WTC11 (cell line): ENCODE measurements at regions of chr10 and their contacts with region 1.

Region 1: GRCh38 chr10:132360766-132361447 is 28.9 kb downstream of the LRRC27 start:
- DNase-seq: peak; percentile 78
- ATAC-seq: peak; percentile 92
- H3K4me3 Mint-ChIP-seq: no peak overlapping the region
- H3K27ac Mint-ChIP-seq: no peak overlapping the region
- H3K4me1 Mint-ChIP-seq: no peaks in the 10 kb centered on the region
- H3K27me3 Mint-ChIP-seq: no peaks in the 10 kb centered on the region
- CTCF ChIP-seq: peak; percentile 61; the same call in 1 of the 2 replicates

Region 2: DNA sequence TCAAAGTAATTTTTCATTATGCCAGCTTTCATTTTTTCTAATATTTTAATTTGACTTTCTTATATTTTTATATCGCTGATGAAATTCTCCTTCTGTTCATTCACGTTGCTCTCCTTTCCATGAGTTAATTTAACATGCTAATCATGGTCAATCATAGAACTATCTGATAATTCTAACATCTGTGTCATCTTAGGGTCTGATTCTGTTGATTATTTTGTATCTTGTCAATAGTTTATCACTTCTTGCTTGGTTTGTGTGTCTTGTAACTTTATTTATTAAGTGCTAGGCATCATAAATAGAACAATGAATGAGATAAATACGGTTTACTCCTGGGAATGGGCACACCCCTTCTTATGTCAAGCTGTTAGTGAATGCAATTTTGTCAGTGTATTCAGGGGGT is 1060.4 kb before region 1 on chr10:
- CTCF ChIA-PET with region 1: no interaction called
- POLR2A ChIA-PET with region 1: no interaction called
- DNase-seq: no peak
- ATAC-seq: no peak
- H3K4me3 Mint-ChIP-seq: no peak overlapping the region
- H3K27ac Mint-ChIP-seq: no peak overlapping the region
- H3K4me1 Mint-ChIP-seq: no peaks in the 10 kb centered on the region
- H3K27me3 Mint-ChIP-seq: peaks cover 11% of the 10 kb centered on the region
- CTCF ChIP-seq: no peak

Region 3: GRCh38 chr10:132347211-132347930 is 13.5 kb before region 1 on chr10:
- CTCF ChIA-PET with region 1: interaction called, 25 read pairs
- POLR2A ChIA-PET with region 1: no interaction called
- DNase-seq: no peak
- ATAC-seq: no peak
- H3K4me3 Mint-ChIP-seq: no peak overlapping the region
- H3K27ac Mint-ChIP-seq: peak overlapping the region; percentile 71; the same call in 1 of the 2 replicates
- H3K4me1 Mint-ChIP-seq: no peaks in the 10 kb centered on the region
- H3K27me3 Mint-ChIP-seq: peaks cover 7% of the 10 kb centered on the region
- CTCF ChIP-seq: no peak

Region 4: DNA sequence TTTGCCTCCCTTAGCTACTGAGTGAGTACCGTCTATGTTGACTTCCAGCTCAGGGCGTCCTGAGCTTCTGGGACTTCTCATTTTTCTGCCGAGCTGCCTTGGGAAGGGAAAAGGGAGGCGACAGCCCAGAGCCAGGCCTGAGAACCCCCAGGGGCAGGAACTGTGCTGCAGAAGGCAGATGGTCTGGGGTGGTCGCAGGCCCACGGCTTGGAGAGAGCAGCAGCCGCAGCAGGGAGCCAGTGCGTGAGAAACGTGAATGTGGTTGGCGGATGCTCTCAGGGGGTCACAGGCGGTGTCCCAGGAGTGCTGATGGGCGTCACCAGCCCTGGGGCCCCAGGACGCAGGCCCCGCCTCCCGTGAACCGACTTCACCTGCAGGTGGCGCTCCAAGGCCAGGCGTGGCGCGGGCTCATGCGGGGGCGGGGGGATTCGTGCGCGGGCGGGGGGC is 26.9 kb after region 1 on chr10:
- CTCF ChIA-PET with region 1: interaction called, 10 read pairs
- POLR2A ChIA-PET with region 1: no interaction called
- DNase-seq: peak; percentile 86
- ATAC-seq: peak; percentile 73
- H3K4me3 Mint-ChIP-seq: peak overlapping the region; percentile 55
- H3K27ac Mint-ChIP-seq: peak overlapping the region; percentile 60
- H3K4me1 Mint-ChIP-seq: peaks cover 6% of the 10 kb centered on the region
- H3K27me3 Mint-ChIP-seq: no peaks in the 10 kb centered on the region
- CTCF ChIP-seq: peak; percentile 56; the same call in 1 of the 2 replicates

Region 5: GRCh38 chr10:132452631-132453469 is 91.9 kb after region 1 on chr10:
- CTCF ChIA-PET with region 1: interaction called, 23 read pairs
- POLR2A ChIA-PET with region 1: no interaction called
- DNase-seq: peak; percentile 87
- ATAC-seq: peak; percentile 46
- H3K4me3 Mint-ChIP-seq: peak overlapping the region; percentile 38
- H3K27ac Mint-ChIP-seq: no peak overlapping the region
- H3K4me1 Mint-ChIP-seq: peaks cover 15% of the 10 kb centered on the region
- H3K27me3 Mint-ChIP-seq: no peaks in the 10 kb centered on the region
- CTCF ChIP-seq: peak; percentile 92